MCF 10A (cell line): ENCODE measurements at regions of chr7 and their contacts with region 1.

Region 1: DNA sequence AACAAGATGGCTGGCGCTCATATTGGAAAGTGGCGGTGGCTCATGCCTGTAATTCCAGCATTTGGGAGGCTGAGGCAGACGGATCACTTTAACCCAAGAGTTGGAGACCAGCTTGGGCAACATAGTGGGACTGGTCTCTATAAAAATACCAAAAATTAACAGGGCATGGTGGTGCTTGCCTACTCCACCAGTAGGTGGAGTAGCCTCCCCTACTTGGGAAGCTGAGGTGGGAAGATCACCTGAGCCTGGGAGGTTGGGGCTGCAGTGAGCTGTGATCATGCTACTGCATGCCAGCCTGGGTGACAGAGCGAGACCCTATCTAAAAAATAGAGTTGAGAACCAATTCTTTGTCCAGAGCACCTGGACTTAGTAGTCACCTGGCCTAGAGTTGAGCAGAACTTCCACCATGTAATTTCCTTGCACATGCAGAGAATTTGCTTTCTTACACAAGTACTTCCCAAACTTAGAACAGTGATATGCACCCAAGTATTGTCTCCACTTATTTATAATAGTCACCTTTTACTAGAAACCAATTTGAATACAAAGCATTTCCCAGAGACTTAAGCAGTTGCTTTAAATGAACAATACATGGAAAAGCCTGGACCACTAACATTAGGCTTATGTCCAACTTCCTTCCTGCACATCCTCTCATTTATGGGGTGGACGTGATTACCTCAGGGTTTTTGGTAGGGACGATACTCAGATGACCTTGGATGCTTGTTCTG is 15.9 kb downstream of the LAMB4 start:
- DNase-seq: peak; percentile 48
- H3K4me3 Mint-ChIP-seq: no peak overlapping the region
- H3K27ac Mint-ChIP-seq: no peak overlapping the region
- H3K4me1 Mint-ChIP-seq: no peaks in the 10 kb centered on the region
- H3K27me3 Mint-ChIP-seq: no peaks in the 10 kb centered on the region
- CTCF ChIP-seq: peak; percentile 61

Region 2: GRCh38 chr7:108129018-108129965 is 15.0 kb after region 1 on chr7:
- CTCF ChIA-PET with region 1: interaction called, 12 read pairs
- POLR2A ChIA-PET with region 1: interaction called, 3 read pairs
- intact Hi-C with region 1: no loop called
- DNase-seq: no peak
- H3K4me3 Mint-ChIP-seq: no peak overlapping the region
- H3K27ac Mint-ChIP-seq: no peak overlapping the region
- H3K4me1 Mint-ChIP-seq: peaks cover 6% of the 10 kb centered on the region
- H3K27me3 Mint-ChIP-seq: no peaks in the 10 kb centered on the region
- CTCF ChIP-seq: no peak

Region 3: GRCh38 chr7:108135446-108136190 is 21.3 kb after region 1 on chr7:
- CTCF ChIA-PET with region 1: interaction called, 12 read pairs
- POLR2A ChIA-PET with region 1: interaction called, 3 read pairs
- intact Hi-C with region 1: no loop called
- DNase-seq: no peak
- H3K4me3 Mint-ChIP-seq: no peak overlapping the region
- H3K27ac Mint-ChIP-seq: no peak overlapping the region
- H3K4me1 Mint-ChIP-seq: peaks cover 6% of the 10 kb centered on the region
- H3K27me3 Mint-ChIP-seq: no peaks in the 10 kb centered on the region
- CTCF ChIP-seq: no peak